ENCODE measurements at regions of chr2 and their contacts with region 1.

Region 1: DNA sequence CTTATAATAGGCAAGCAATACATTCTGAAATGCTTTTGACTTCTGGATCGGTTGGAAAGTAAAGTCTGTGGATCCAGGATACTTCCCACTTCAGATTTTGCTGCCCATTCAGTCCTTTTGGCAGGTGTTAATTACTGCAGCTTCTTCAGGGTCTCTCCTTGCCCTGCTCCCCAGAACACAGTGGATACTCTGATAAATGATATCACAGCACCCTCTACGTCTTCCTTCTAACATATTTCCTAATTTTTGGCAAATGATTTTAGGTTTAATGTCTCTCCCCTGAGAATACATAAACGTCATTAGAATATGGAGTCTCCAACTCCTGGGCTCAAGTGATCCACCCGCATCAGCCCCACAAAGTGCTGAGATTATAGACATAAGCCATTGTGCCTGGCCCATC is 249.8 kb downstream of the NYAP2 start:
- DNase-seq: no peak
- H3K4me3 Mint-ChIP-seq: no peak overlapping the region
- H3K27ac Mint-ChIP-seq: no peak overlapping the region
- H3K4me1 Mint-ChIP-seq: no peaks in the 10 kb centered on the region
- H3K27me3 Mint-ChIP-seq: no peaks in the 10 kb centered on the region
- CTCF ChIP-seq: no peak

Region 2: DNA sequence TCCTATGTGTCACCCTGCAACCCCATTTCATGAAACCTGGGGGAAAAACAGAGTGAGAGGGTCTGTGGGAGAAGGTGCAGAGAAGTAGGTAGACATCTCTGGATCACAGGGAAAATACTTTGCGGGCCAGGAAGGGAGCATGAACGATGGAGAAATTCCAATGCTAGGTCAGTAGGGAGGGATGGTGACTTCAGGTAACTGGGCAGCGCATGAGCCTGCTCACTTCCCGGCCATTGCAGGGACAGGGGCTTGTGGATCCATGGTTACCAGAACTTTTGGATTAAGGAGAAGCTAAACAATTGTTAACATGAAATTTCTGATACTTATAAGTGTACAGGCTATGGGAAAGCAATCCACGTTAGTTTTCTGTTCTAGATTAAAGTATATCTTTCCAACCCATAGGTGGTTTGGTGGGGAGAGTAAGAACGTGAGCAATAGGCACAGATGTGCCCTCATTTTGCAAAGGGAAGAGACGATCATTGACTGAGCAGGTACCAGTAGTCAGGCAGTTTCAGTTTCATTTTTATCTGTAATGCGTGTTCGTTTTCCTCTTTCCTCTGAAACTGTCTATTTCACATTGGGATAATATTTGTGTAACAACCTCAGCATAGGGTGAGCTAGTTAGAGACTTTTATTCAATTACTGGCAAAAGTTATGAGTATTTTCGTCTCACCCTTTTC is 184.8 kb before region 1 on chr2:
- CTCF ChIA-PET with region 1: no interaction called
- intact Hi-C with region 1: loop called (anchors 10 kb)
- DNase-seq: no peak
- H3K4me3 Mint-ChIP-seq: no peak overlapping the region
- H3K27ac Mint-ChIP-seq: no peak overlapping the region
- H3K4me1 Mint-ChIP-seq: peaks cover 60% of the 10 kb centered on the region
- H3K27me3 Mint-ChIP-seq: no peaks in the 10 kb centered on the region
- CTCF ChIP-seq: no peak

Region 3: DNA sequence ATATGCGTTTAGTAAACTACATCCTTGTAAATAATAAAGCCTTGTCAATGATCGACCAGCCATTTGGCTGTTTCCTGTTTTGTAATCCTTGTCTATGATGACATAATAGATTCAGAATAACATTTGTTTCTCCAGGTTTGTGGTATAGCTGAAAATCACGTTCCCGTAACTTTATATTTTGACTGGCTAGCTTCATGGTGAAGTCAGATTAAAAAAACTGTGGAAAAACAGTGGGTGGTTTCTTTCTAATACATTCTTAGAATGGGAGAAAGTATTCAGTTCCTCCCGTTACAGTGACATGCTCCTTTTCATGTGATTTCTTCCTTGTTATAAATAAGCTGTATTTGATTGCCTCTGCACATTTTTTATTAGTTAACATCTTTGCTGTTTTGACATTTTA is 117.2 kb after region 1 on chr2:
- CTCF ChIA-PET with region 1: no interaction called
- intact Hi-C with region 1: no loop called
- DNase-seq: no peak
- H3K4me3 Mint-ChIP-seq: no peak overlapping the region
- H3K27ac Mint-ChIP-seq: no peak overlapping the region
- H3K4me1 Mint-ChIP-seq: no peaks in the 10 kb centered on the region
- H3K27me3 Mint-ChIP-seq: no peaks in the 10 kb centered on the region
- CTCF ChIP-seq: no peak